ENCODE measurements at regions of chr3 and their contacts with region 1.

Region 1: GRCh38 chr3:150183678-150184425 is 213.2 kb upstream of the PFN2 start:
- DNase-seq: peak; percentile 59
- H3K27ac ChIP-seq: no peak overlapping the region
- CTCF ChIP-seq: peak; percentile 77

Region 2: GRCh38 chr3:149967086-149967685 is 216.7 kb before region 1 on chr3:
- CTCF ChIA-PET with region 1: interaction called, 21 read pairs
- POLR2A ChIA-PET with region 1: interaction called, 4 read pairs
- DNase-seq: peak; percentile 25
- H3K27ac ChIP-seq: no peak overlapping the region
- CTCF ChIP-seq: peak; percentile 68